ENCODE measurements at regions of chr19 and their contacts with region 1.

Region 1: DNA sequence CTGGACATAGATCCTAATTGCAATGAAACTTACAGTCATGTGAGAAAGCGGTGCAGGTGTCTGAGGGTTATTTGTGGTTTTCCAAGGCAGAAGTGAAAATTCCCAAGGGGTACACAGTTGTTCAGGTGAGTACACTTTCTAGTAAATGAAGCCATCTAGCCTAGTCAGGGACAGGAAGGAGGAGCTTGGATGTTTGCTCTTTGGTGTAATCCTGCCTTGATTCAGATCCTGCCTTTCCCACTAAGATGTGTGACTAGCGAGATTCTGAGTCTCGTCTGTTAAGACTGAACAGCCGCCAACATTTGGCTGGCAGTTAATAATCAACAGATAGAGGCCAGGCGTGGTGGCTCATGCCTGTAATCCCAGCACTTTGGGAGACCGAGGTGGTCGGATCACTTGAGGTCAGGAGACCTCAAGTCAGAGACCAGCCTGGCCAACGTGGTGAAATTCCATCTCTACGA is 2.5 kb downstream of the RPS9 start:
- DNase-seq: no peak
- ATAC-seq: no peak
- H3K4me3 Mint-ChIP-seq: peak overlapping the region; percentile 100
- H3K27ac Mint-ChIP-seq: no peak overlapping the region
- H3K4me1 Mint-ChIP-seq: peaks cover 81% of the 10 kb centered on the region
- H3K27me3 Mint-ChIP-seq: no peaks in the 10 kb centered on the region

Region 2: GRCh38 chr19:54189735-54190502 is 13.3 kb before region 1 on chr19:
- CTCF ChIA-PET with region 1: interaction called, 7 read pairs
- POLR2A ChIA-PET with region 1: interaction called, 103 read pairs
- DNase-seq: peak; percentile 100
- ATAC-seq: peak; percentile 63
- H3K4me3 Mint-ChIP-seq: peak overlapping the region; percentile 82
- H3K27ac Mint-ChIP-seq: peak overlapping the region; percentile 98
- H3K4me1 Mint-ChIP-seq: peaks cover 39% of the 10 kb centered on the region
- H3K27me3 Mint-ChIP-seq: no peaks in the 10 kb centered on the region

Measured in activated CD8-positive, alpha-beta T cell treated with anti-CD3 and anti-CD28 coated beads, Interleukin-2, amount 10 ng/mL, durations not matched to agents 7 days and 5 days (primary cell).